Activated CD4-positive, alpha-beta memory T cell treated with anti-CD3 and anti-CD28 coated beads for 36 hours (primary cell): ENCODE measurements at regions of chr13 and their contacts with region 1.

Region 1: GRCh38 chr13:33799950-33800592 is 17.9 kb upstream of the RFC3 start:
- DNase-seq: no peak
- H3K4me3 Mint-ChIP-seq: no peak overlapping the region
- H3K27ac Mint-ChIP-seq: no peak overlapping the region
- H3K4me1 Mint-ChIP-seq: no peaks in the 10 kb centered on the region
- H3K27me3 Mint-ChIP-seq: peaks cover 2% of the 10 kb centered on the region

Region 2: GRCh38 chr13:33773790-33774462 is 26.1 kb before region 1 on chr13:
- CTCF ChIA-PET with region 1: no interaction called
- POLR2A ChIA-PET with region 1: no interaction called
- intact Hi-C with region 1: no loop called
- DNase-seq: no peak
- H3K4me3 Mint-ChIP-seq: no peak overlapping the region
- H3K27ac Mint-ChIP-seq: no peak overlapping the region
- H3K4me1 Mint-ChIP-seq: no peaks in the 10 kb centered on the region
- H3K27me3 Mint-ChIP-seq: peaks cover 2% of the 10 kb centered on the region

Region 3: GRCh38 chr13:34076943-34077703 is 277.1 kb after region 1 on chr13:
- CTCF ChIA-PET with region 1: interaction called, 3 read pairs
- POLR2A ChIA-PET with region 1: no interaction called
- intact Hi-C with region 1: loop called (anchors 5 kb)
- DNase-seq: no peak
- H3K4me3 Mint-ChIP-seq: no peak overlapping the region
- H3K27ac Mint-ChIP-seq: no peak overlapping the region
- H3K4me1 Mint-ChIP-seq: no peaks in the 10 kb centered on the region
- H3K27me3 Mint-ChIP-seq: no peaks in the 10 kb centered on the region